Natural killer cell (primary cell): ENCODE measurements at regions of chr9 and their contacts with region 1.

Region 1: DNA sequence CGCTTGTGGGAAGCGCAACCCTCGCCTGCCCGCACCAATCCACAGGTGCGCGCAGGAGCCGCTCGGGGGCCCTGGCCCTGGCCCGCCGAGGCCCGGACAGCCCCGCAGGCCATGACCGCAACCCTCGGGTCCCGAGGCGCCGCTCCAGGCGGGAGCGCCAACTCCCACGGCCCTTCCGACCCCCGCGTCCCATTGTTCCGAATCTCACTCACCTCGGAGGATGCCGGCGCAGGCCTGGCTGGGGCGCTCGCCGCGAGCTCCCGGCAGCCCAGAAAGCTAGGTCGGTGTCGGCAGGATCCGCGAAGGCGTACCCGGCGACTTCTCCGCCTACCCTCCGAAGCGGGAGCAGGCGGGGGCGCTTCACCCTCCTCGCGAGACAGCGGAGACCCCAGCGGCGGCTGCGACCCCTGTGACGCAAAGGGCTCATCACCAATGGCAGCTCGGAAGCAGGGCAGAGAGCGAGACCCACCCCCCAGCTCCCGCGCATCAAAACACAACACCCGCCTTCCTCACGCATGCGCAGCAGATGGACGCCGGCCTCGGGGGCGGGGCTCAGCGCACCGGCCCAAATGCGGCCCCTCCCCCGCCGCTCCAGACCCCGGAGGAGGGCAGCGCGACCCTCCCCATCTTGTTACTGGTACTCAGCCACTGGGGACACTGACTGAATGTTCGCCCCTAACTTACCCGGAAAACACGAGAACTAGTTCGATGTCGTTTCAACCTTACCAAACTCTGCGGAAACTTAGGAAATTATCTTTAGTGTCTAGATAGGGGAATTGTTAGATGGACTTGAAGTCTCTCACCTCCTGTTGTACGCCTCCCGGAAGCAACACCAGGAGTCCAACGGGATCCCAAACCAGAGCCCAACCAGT is 1.3 kb upstream of the SMIM27 start:
- DNase-seq: peak; percentile 92 to 97
- ATAC-seq: peak; percentile 81 to 93 (median 88)
- H3K4me3 ChIP-seq: peak overlapping the region; percentile 92
- H3K4me3 Mint-ChIP-seq: peak overlapping the region; percentile 98
- H3K27ac ChIP-seq: peak overlapping the region; percentile 95
- H3K27ac Mint-ChIP-seq: peak overlapping the region; percentile 97 to 99
- H3K4me1 ChIP-seq: peaks cover 24% of the 10 kb centered on the region
- H3K4me1 Mint-ChIP-seq: peaks cover 43 to 52% of the 10 kb centered on the region in 2 donors
- H3K27me3 ChIP-seq: no peaks in the 10 kb centered on the region
- H3K27me3 Mint-ChIP-seq: no peaks in the 10 kb centered on the region
- CTCF ChIP-seq: no peak

Region 2: GRCh38 chr9:32526041-32526706 is 24.6 kb before region 1 on chr9 and contains the start of gene RIGI:
- intact Hi-C with region 1: loop called (anchors 1 kb)
- DNase-seq: peak; percentile 72 to 93
- ATAC-seq: peak; percentile 80 to 84 (median 82)
- H3K4me3 ChIP-seq: peak within 1 kb of the TSS; percentile 92
- H3K4me3 Mint-ChIP-seq: peak within 1 kb of the TSS; percentile 93
- H3K27ac ChIP-seq: peak within 1 kb of the TSS; percentile 87
- H3K27ac Mint-ChIP-seq: peak within 1 kb of the TSS; percentile 79 to 96
- H3K4me1 ChIP-seq: peaks cover 12% of the 10 kb centered on the region
- H3K4me1 Mint-ChIP-seq: peaks cover 53 to 56% of the 10 kb centered on the region in 2 donors
- H3K27me3 ChIP-seq: no peaks in the 10 kb centered on the region
- H3K27me3 Mint-ChIP-seq: no peaks in the 10 kb centered on the region
- CTCF ChIP-seq: no peak
- total RNA-seq, gene RIGI: 13.8 to 21.3 (median 15.7) TPM

Region 3: GRCh38 chr9:32566770-32567169 is 16.0 kb after region 1 on chr9:
- intact Hi-C with region 1: no loop called
- DNase-seq: no peak
- ATAC-seq: no peak
- H3K4me3 ChIP-seq: no peak overlapping the region
- H3K4me3 Mint-ChIP-seq: no peak overlapping the region
- H3K27ac ChIP-seq: no peak overlapping the region
- H3K27ac Mint-ChIP-seq: peak overlapping the region; percentile 56 to 81
- H3K4me1 ChIP-seq: peaks cover under 1% of the 10 kb centered on the region
- H3K4me1 Mint-ChIP-seq: peaks cover 14 to 26% of the 10 kb centered on the region in 2 donors
- H3K27me3 ChIP-seq: no peaks in the 10 kb centered on the region
- H3K27me3 Mint-ChIP-seq: no peaks in the 10 kb centered on the region
- CTCF ChIP-seq: no peak

Region 4: DNA sequence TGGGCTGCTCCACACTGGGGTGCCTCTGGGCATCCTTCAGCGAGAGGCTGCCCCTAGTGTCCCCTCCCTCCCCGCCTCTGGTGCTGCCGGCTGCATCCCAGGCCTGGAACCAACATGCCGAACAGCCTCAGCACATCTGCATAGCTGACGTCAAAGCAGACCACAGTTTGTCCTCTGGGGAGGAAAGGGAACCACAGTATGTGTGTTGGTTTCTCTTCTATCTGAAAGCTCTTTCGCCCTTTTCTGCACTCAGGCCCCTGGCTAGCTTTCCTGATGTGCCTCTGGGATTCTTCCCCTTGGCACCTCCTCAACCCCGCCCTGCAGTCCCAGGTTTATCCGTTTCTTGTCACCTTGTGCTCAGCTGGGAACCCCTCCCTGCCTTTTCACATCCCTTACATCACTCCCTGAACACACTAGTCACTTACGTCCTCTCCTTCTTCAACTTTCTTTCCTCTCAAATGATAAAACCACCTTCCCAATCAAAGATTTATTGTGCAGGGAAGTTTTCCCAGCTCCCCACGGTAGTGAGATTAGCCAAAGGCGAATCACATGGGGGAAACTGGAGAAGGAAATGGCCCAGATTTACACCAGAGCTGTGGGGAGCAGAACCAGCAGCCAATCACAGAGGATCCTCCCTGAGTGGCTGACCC is 651.9 kb after region 1 on chr9:
- intact Hi-C with region 1: no loop called
- DNase-seq: peak; percentile 42 to 66
- ATAC-seq: peak; percentile 86 to 99 (median 95)
- H3K4me3 ChIP-seq: no peak overlapping the region
- H3K4me3 Mint-ChIP-seq: peak overlapping the region; percentile 22
- H3K27ac ChIP-seq: peak overlapping the region; percentile 17
- H3K27ac Mint-ChIP-seq: peak overlapping the region; percentile 8 to 87
- H3K4me1 ChIP-seq: peaks cover 15% of the 10 kb centered on the region
- H3K4me1 Mint-ChIP-seq: peaks cover 16 to 23% of the 10 kb centered on the region in 2 donors
- H3K27me3 ChIP-seq: no peaks in the 10 kb centered on the region
- H3K27me3 Mint-ChIP-seq: no peaks in the 10 kb centered on the region
- CTCF ChIP-seq: no peak

Region 5: GRCh38 chr9:33290247-33291030 is 739.6 kb after region 1 on chr9 and contains the start of gene NFX1:
- intact Hi-C with region 1: loop called (anchors 10 kb)
- DNase-seq: peak; percentile 98 to 100
- ATAC-seq: peak; percentile 73 to 94 (median 89)
- H3K4me3 ChIP-seq: peak within 1 kb of the TSS; percentile 82
- H3K4me3 Mint-ChIP-seq: peak within 1 kb of the TSS; percentile 99
- H3K27ac ChIP-seq: peak within 1 kb of the TSS; percentile 98
- H3K27ac Mint-ChIP-seq: peak within 1 kb of the TSS; percentile 100
- H3K4me1 ChIP-seq: peaks cover 34% of the 10 kb centered on the region
- H3K4me1 Mint-ChIP-seq: peaks cover 41 to 42% of the 10 kb centered on the region in 2 donors
- H3K27me3 ChIP-seq: no peaks in the 10 kb centered on the region
- H3K27me3 Mint-ChIP-seq: peaks cover 0 to 3% of the 10 kb centered on the region in 2 donors
- CTCF ChIP-seq: no peak
- total RNA-seq, gene NFX1: 33.0 to 38.8 (median 38.5) TPM